ENCODE measurements at regions of chr5 and their contacts with region 1.

Region 1: DNA sequence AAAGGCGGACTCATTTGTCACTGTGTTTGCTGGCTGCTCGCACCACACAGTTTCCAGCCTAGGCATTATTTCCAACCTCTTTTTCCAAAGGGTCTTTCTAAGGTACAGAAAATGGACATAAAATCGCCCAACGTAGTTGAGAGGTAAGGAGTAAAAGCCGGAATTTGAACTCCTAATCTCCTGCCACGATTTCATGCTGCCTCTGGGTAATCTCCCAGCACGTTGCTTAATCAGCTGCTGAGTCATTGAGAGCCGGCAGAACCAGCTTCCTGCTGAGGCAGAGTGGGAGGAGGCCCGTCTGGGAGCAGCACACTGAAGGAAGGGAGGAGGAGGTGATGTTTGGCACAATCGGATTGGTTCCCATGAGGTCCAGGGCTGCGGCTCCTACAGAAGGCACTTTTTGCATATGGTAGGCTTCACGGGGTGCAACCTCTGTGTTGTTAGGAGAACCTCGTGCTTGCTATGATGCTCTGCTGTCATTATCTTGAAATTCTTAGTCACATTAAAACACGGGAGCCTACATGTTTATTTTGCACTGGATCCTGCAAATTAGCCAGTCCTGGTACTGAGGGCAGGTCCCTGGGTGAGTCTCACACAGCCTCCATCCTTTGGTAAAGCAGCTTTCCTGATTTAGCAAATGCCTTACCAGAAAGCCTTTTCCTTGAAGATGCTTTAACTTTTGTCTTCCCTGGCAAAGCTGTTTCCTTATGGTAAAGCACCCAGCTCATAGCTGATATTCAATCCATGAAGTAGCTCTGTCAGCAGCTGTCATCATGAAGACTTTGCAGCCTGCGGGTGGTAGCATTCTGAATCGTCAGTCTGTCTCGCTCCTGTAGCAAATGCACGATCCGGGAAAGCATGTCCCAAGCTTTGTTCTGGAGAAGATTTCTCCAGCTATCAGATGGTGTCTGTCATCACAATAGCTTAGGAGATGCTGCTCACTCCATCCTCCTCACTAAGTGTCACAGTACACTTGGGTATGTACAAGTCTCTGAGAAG is 191.6 kb upstream of the MSX2 start:
- DNase-seq: peak; percentile 64 to 93
- H3K4me3 ChIP-seq: no peak overlapping the region
- H3K27ac ChIP-seq: peak overlapping the region; percentile 34 to 64
- H3K4me1 ChIP-seq: peaks cover 12 to 16% of the 10 kb centered on the region in 2 donors
- H3K27me3 ChIP-seq: no peaks in the 10 kb centered on the region
- CTCF ChIP-seq: no peak

Region 2: DNA sequence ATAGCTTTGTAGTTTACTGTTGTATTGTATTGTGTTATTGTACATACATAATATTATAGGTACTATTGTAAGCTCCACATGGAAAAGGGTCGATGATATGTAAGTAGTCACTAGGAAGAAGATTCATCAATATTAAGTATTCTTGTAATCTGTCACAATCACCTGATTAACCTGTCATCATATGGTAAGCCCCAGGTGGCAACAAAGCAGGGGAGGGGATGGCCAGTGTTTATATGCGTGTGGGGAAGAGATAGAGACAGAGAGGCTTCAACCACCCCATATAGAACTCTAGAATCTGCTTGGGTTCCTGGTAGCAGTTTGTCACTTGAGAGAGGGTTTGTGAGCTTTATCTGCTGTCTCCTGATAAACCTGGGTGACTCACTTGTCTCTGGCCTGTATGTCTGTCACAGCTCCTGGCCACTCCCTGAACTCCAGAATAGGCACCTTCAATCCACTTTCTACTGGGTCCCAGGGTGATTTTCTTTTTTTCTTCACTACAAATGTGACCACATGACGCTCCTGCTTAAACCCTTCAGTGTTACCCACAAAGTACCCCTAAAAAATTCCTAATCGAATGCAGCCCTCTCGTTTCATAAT is 693.5 kb before region 1 on chr5:
- intact Hi-C with region 1: no loop called
- DNase-seq: no peak
- H3K4me3 ChIP-seq: no peak overlapping the region
- H3K27ac ChIP-seq: no peak overlapping the region
- H3K4me1 ChIP-seq: no peaks in the 10 kb centered on the region
- H3K27me3 ChIP-seq: no peaks in the 10 kb centered on the region
- CTCF ChIP-seq: no peak

Region 3: DNA sequence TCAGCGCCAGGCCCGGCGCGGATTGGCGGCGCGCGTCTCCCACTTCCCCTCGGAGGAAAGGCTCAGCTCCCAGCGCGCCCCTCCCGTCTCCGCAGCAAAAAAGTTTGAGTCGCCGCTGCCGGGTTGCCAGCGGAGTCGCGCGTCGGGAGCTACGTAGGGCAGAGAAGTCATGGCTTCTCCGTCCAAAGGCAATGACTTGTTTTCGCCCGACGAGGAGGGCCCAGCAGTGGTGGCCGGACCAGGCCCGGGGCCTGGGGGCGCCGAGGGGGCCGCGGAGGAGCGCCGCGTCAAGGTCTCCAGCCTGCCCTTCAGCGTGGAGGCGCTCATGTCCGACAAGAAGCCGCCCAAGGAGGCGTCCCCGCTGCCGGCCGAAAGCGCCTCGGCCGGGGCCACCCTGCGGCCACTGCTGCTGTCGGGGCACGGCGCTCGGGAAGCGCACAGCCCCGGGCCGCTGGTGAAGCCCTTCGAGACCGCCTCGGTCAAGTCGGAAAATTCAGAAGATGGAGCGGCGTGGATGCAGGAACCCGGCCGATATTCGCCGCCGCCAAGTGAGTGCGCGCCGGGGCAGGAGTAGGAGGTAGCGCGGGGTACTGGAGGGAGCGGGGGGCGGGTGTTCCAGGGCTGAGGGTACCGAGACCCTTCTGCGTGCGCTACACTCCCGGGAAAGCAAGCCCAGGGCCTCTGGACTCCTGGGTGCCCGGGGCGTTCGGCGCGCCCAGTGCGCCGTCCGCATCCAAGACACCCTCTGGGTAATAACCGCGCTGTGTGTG is 191.9 kb after region 1 on chr5 and contains the start of gene MSX2:
- intact Hi-C with region 1: loop called (anchors 10 kb)
- DNase-seq: peak; percentile 16 to 83
- H3K4me3 ChIP-seq: peak within 1 kb of the TSS; percentile 52 to 82
- H3K27ac ChIP-seq: peak within 1 kb of the TSS; percentile 39 to 59
- H3K4me1 ChIP-seq: no peaks in the 10 kb centered on the region
- H3K27me3 ChIP-seq: peaks cover 21% of the 10 kb centered on the region
- CTCF ChIP-seq: no peak
- total RNA-seq, gene MSX2: not detected

Measured in ascending aorta (tissue), 2 donors.